Caco-2 (cell line): ENCODE measurements at regions of chr9 and their contacts with region 1.

Region 1: GRCh38 chr9:126611592-126612325 is 2.0 kb upstream of the LMX1B start:
- DNase-seq: peak; percentile 84 to 92
- H3K4me3 ChIP-seq: peak overlapping the region; percentile 65
- H3K4me3 Mint-ChIP-seq: peak overlapping the region; percentile 75
- H3K27ac Mint-ChIP-seq: no peak overlapping the region
- H3K4me1 ChIP-seq: peaks cover 10% of the 10 kb centered on the region; the same call in 1 of the 2 replicates
- H3K4me1 Mint-ChIP-seq: peaks cover 7% of the 10 kb centered on the region
- H3K27me3 ChIP-seq: no peaks in the 10 kb centered on the region
- H3K27me3 Mint-ChIP-seq: no peaks in the 10 kb centered on the region
- CTCF ChIP-seq: peak; percentile 82 to 88

Region 2: GRCh38 chr9:126636983-126637798 is 25.4 kb after region 1 on chr9:
- CTCF ChIA-PET with region 1: no interaction called
- POLR2A ChIA-PET with region 1: no interaction called
- intact Hi-C with region 1: no loop called
- DNase-seq: no peak
- H3K4me3 ChIP-seq: no peak overlapping the region
- H3K4me3 Mint-ChIP-seq: no peak overlapping the region
- H3K27ac Mint-ChIP-seq: no peak overlapping the region
- H3K4me1 ChIP-seq: peaks cover 18% of the 10 kb centered on the region
- H3K4me1 Mint-ChIP-seq: peaks cover 15% of the 10 kb centered on the region
- H3K27me3 ChIP-seq: no peaks in the 10 kb centered on the region
- H3K27me3 Mint-ChIP-seq: no peaks in the 10 kb centered on the region
- CTCF ChIP-seq: no peak

Region 3: DNA sequence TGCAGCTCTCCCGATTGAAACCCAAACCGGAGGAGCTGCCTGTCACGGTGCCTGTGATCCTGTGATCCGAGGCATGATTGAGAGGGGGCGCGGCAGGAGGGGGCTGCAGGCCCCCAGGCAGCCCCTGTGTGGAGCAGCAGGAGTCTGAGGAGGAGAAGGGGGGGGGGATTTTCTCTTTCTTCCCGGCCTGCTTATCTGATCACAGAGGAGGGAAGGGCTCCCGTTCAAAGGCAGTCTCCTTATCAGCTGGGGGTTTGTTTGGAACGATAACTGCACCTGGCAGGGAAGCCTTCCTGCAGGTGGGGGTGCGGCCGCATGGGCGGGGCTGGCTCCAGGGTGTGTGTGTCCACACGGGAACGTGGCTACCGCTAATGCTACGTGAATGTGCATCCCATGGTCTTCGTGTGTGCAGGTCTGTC is 40.4 kb after region 1 on chr9:
- CTCF ChIA-PET with region 1: no interaction called
- POLR2A ChIA-PET with region 1: no interaction called
- intact Hi-C with region 1: loop called (anchors 5 kb)
- DNase-seq: peak; percentile 89 to 94
- H3K4me3 ChIP-seq: no peak overlapping the region
- H3K4me3 Mint-ChIP-seq: peak overlapping the region; percentile 49
- H3K27ac Mint-ChIP-seq: peak overlapping the region; percentile 48
- H3K4me1 ChIP-seq: peaks cover 44% of the 10 kb centered on the region
- H3K4me1 Mint-ChIP-seq: peaks cover 56% of the 10 kb centered on the region
- H3K27me3 ChIP-seq: no peaks in the 10 kb centered on the region
- H3K27me3 Mint-ChIP-seq: no peaks in the 10 kb centered on the region
- CTCF ChIP-seq: no peak

Region 4: DNA sequence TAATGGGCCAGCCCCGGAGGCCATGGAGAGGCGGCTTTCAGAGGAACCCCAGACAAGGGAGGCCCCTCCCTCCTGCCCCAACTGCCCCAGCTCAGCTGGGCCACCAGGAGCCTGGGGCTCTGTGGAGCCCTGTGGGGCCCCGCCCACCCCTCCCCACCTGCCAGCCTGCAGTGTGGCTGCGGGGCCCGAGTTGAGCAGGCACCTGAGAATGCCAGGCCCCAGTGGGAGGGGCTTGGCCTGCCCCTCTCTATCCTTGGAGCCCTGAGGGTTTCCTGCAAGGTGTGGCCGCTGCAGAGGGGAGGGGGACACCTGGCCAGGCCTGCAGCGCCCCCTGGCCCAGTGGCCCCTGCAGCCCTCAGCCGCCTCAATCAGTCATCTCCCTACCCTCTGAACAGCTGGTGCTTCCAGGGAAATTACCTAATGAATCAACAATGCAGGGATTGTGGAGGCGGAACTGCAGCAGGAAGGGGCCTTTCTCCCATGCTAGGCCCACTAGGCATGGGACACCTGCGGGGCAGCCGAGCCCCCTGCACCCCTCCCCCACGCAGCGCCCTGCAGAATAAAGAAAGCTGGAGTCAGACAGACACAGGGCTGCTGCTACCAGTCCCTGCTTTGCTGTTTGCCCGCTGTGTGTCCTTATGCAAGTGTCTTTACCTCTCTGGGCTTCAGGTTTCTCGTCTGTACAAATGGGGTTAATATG is 49.9 kb after region 1 on chr9:
- CTCF ChIA-PET with region 1: interaction called, 4 read pairs
- POLR2A ChIA-PET with region 1: no interaction called
- intact Hi-C with region 1: loop called (anchors 1 kb)
- DNase-seq: peak; percentile 74 to 84
- H3K4me3 ChIP-seq: no peak overlapping the region
- H3K4me3 Mint-ChIP-seq: no peak overlapping the region
- H3K27ac Mint-ChIP-seq: peak overlapping the region; percentile 26
- H3K4me1 ChIP-seq: peaks cover 46% of the 10 kb centered on the region
- H3K4me1 Mint-ChIP-seq: peaks cover 13% of the 10 kb centered on the region
- H3K27me3 ChIP-seq: no peaks in the 10 kb centered on the region
- H3K27me3 Mint-ChIP-seq: no peaks in the 10 kb centered on the region
- CTCF ChIP-seq: peak; percentile 39 to 59

Region 5: DNA sequence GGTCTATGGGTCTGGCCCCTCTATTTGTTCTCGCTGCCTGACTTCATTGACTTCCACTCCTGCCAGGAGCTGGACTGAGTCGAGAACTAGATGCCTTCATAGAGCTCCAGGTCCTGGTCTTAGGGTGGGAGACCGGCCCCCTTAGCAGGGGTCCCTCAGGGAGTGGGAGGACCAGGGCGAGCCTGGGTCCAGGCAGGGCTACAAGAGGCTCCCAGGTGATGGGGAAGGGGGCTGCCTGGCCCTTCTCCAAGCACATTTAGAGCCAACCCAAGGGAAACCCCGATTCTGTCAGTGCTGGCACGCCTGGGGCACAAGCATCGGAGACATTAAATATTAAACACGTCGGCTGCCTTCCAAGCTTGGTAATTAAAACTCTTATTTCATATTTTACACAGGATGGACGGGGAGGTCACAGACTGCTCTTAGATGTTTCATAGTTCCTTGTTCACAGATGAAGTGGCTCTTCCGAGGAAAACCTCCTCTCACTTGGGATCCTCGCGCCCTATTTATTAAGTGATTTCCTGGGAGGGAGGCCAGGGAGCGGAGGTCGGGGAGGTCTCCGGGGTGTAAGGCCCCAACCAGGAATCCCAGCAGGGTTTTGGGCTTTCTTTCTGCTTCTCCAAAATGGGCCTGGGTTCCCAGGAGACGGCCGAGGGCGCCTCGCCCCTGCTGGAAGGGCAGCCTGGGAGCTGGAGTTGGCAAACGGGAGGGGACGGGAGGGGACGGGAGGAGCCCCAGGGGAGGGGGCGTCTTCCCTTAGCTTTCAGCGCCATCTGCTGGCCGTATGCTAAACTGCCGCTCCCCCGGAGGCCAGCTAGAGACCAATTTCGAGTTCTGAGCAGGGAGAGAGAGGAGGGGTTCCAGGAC is 169.7 kb after region 1 on chr9:
- CTCF ChIA-PET with region 1: interaction called, 4 read pairs
- POLR2A ChIA-PET with region 1: no interaction called
- intact Hi-C with region 1: loop called (anchors 2 kb)
- DNase-seq: peak; percentile 86 to 93
- H3K4me3 ChIP-seq: no peak overlapping the region
- H3K4me3 Mint-ChIP-seq: peak overlapping the region; percentile 48
- H3K27ac Mint-ChIP-seq: no peak overlapping the region
- H3K4me1 ChIP-seq: no peaks in the 10 kb centered on the region
- H3K4me1 Mint-ChIP-seq: no peaks in the 10 kb centered on the region
- H3K27me3 ChIP-seq: no peaks in the 10 kb centered on the region
- H3K27me3 Mint-ChIP-seq: no peaks in the 10 kb centered on the region
- CTCF ChIP-seq: peak; percentile 95 to 96